ENCODE measurements at regions of chr11 and their contacts with region 1.

Region 1: DNA sequence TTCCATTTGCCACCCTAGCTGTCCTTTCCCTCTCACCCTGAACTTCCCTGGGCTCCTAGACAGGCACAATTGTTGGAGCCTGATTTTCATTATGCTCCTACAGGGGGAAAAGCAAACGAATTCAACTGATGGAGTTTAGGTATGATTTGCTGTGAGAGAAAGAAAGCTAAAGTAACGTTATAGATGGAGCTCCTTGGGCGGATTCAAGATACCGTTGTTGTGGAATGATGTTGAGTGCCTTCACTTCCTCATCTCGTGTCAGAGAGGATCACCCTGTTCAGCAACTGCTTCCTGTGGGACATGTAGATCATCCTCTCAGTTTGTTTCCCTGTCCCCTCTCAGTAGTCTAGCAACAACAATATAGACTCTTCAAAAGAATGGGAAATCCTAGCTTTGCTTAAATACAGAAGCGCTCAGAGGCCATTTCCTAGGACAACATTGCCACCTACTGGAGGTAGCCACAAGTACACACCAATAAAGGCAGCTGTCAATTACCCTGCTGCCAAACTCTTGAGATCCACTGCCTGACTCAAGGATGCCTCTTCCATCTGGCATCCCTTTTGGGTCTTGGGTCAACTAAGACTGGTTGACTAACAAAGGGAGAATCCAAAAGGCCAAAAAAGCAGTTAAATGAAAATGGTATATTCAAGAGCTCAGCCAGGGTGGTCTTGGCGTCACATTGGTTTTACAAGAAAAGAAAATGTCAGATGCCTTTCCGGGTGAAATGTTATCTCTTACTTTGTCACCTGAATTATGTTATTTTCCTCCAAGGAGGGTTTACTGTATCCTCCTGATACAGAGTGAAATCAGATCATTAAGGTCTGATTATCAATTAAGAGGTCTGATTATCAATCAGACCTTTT is 13.5 kb upstream of the DTX4 start:
- DNase-seq: no peak
- ATAC-seq: peak; percentile 98
- H3K4me3 ChIP-seq: no peak overlapping the region
- H3K27ac ChIP-seq: no peak overlapping the region
- H3K4me1 ChIP-seq: peaks cover 2% of the 10 kb centered on the region
- H3K27me3 ChIP-seq: no peaks in the 10 kb centered on the region
- CTCF ChIP-seq: peak; percentile 74 to 97 (median 92); a peak in 5 of 6 replicates
- EP300 ChIP-seq: no peak
- POLR2A ChIP-seq: no peak
- RAD21 ChIP-seq: peak; percentile 91

Region 2: DNA sequence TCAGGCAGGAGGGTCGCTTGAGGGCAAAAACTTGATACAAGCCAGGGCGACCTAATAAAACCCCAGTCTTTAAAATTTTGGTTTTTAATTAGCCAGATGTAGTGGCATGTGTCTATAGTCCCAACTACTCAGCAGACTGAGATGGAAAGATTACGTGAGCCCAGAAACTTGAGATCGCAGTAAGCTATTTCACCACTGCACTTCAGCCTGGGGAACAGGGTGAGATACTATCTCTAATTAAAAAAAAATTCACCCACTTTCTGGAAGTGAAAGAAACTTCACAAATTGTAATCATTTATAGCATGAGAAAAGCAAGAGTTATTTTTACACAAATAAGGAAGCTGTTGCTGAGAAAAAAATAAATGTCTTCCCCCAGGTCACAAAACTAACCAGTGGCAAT is 313.1 kb before region 1 on chr11:
- CTCF ChIA-PET with region 1: no interaction called
- POLR2A ChIA-PET with region 1: no interaction called
- RAD21 ChIA-PET with region 1: no interaction called
- SMC1A ChIA-PET with region 1: no interaction called
- in situ Hi-C with region 1: no loop called
- intact Hi-C with region 1: loop called (anchors 5 kb)
- DNase-seq: no peak
- ATAC-seq: 0 out of 3 replicates have a peak, but pooled peaks have one; percentile 32
- H3K4me3 ChIP-seq: no peak overlapping the region
- H3K27ac ChIP-seq: no peak overlapping the region
- H3K4me1 ChIP-seq: no peaks in the 10 kb centered on the region
- H3K27me3 ChIP-seq: no peaks in the 10 kb centered on the region
- CTCF ChIP-seq: no peak
- EP300 ChIP-seq: no peak
- POLR2A ChIP-seq: no peak
- RAD21 ChIP-seq: no peak

Region 3: GRCh38 chr11:59053387-59053786 is 105.0 kb before region 1 on chr11:
- CTCF ChIA-PET with region 1: interaction called, 39 read pairs
- POLR2A ChIA-PET with region 1: interaction called, 3 read pairs
- RAD21 ChIA-PET with region 1: interaction called, 29 read pairs
- SMC1A ChIA-PET with region 1: interaction called, 21 read pairs
- in situ Hi-C with region 1: no loop called
- intact Hi-C with region 1: loop called (anchors 1 kb)
- DNase-seq: no peak
- ATAC-seq: peak; percentile 84
- H3K4me3 ChIP-seq: no peak overlapping the region
- H3K27ac ChIP-seq: no peak overlapping the region
- H3K4me1 ChIP-seq: peaks cover 4% of the 10 kb centered on the region; the same call in 1 of the 2 replicates
- H3K27me3 ChIP-seq: no peaks in the 10 kb centered on the region
- CTCF ChIP-seq: peak; percentile 47 to 75 (median 63)
- EP300 ChIP-seq: no peak
- POLR2A ChIP-seq: no peak
- RAD21 ChIP-seq: peak; percentile 44; the same call in 1 of the 2 replicates

Region 4: GRCh38 chr11:59097113-59097708 is 61.2 kb before region 1 on chr11:
- CTCF ChIA-PET with region 1: interaction called, 41 read pairs
- POLR2A ChIA-PET with region 1: no interaction called
- RAD21 ChIA-PET with region 1: interaction called, 5 read pairs
- SMC1A ChIA-PET with region 1: interaction called, 11 read pairs
- in situ Hi-C with region 1: no loop called
- intact Hi-C with region 1: no loop called
- DNase-seq: no peak
- ATAC-seq: peak; percentile 70
- H3K4me3 ChIP-seq: 0 out of 2 replicates have a peak overlapping the region, but pooled peaks have one; percentile 3
- H3K27ac ChIP-seq: peak overlapping the region; percentile 53
- H3K4me1 ChIP-seq: peaks cover 22% of the 10 kb centered on the region
- H3K27me3 ChIP-seq: no peaks in the 10 kb centered on the region
- CTCF ChIP-seq: peak; percentile 51 to 67 (median 63)
- EP300 ChIP-seq: no peak
- POLR2A ChIP-seq: no peak
- RAD21 ChIP-seq: peak; percentile 50

Region 5: GRCh38 chr11:59142530-59143507 is 15.6 kb before region 1 on chr11 and contains the start of gene FAM111A:
- CTCF ChIA-PET with region 1: interaction called, 250 read pairs
- POLR2A ChIA-PET with region 1: interaction called, 10 read pairs
- RAD21 ChIA-PET with region 1: interaction called, 80 read pairs
- SMC1A ChIA-PET with region 1: interaction called, 36 read pairs
- in situ Hi-C with region 1: no loop called
- intact Hi-C with region 1: loop called (anchors 1 kb)
- DNase-seq: peak; percentile 69
- ATAC-seq: peak; percentile 85
- H3K4me3 ChIP-seq: peak within 1 kb of the TSS; percentile 83
- H3K27ac ChIP-seq: peak within 1 kb of the TSS; percentile 91
- H3K4me1 ChIP-seq: peaks cover 21% of the 10 kb centered on the region; the same call in 1 of the 2 replicates
- H3K27me3 ChIP-seq: no peaks in the 10 kb centered on the region
- CTCF ChIP-seq: peak; percentile 39 to 54 (median 39)
- EP300 ChIP-seq: no peak
- POLR2A ChIP-seq: peak; percentile 73; the same call in 1 of the 2 replicates
- RAD21 ChIP-seq: peak; percentile 44; the same call in 1 of the 2 replicates
- polyA plus RNA-seq, gene FAM111A: 26.6 to 41.6 TPM

Region 6: GRCh38 chr11:59197991-59198390 is 39.6 kb after region 1 on chr11:
- CTCF ChIA-PET with region 1: interaction called, 14 read pairs
- POLR2A ChIA-PET with region 1: no interaction called
- RAD21 ChIA-PET with region 1: interaction called, 4 read pairs
- SMC1A ChIA-PET with region 1: interaction called, 6 read pairs
- in situ Hi-C with region 1: no loop called
- intact Hi-C with region 1: no loop called
- DNase-seq: no peak
- ATAC-seq: no peak
- H3K4me3 ChIP-seq: no peak overlapping the region
- H3K27ac ChIP-seq: peak overlapping the region; percentile 94
- H3K4me1 ChIP-seq: peaks cover 35% of the 10 kb centered on the region
- H3K27me3 ChIP-seq: no peaks in the 10 kb centered on the region
- CTCF ChIP-seq: no peak
- EP300 ChIP-seq: no peak
- POLR2A ChIP-seq: no peak
- RAD21 ChIP-seq: no peak

Measured in GM12878 (cell line).